ENCODE measurements at regions of chr2 and their contacts with region 1.

Region 1: DNA sequence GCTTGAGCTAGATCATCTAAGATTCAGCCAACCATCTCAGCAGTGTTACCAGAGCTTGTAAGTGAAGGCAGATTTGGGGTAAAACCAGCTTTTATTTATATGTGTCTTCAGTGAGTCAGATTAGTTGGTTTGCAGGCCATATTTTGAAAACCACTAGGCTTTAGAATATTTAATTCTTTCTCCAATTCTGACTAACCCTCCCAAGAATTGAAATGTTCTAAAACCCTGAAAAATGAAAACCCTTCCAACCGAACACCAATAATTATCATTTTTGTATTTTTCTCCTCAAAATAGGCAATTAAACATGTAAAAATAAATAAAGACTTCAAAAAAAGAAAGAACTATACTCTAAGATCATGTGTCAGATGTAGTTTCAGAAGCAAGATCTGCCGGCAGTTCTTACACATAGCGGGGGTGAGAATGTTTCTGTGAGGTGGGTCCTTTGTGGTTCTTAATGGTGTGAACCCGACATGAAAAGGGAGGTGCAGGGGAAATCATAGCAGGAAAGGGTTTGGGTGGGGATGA is 14.2 kb downstream of the PLEK start:
- DNase-seq: no peak
- ATAC-seq: peak; percentile 14
- H3K4me3 ChIP-seq: no peak overlapping the region
- H3K4me1 ChIP-seq: no peaks in the 10 kb centered on the region
- CTCF ChIP-seq: no peak

Region 2: GRCh38 chr2:68423966-68424650 is 44.9 kb after region 1 on chr2:
- intact Hi-C with region 1: loop called in 1 of 2 experiments (anchors 10 kb)
- DNase-seq: no peak
- ATAC-seq: peak; percentile 67
- H3K4me3 ChIP-seq: no peak overlapping the region
- H3K4me1 ChIP-seq: no peaks in the 10 kb centered on the region
- CTCF ChIP-seq: no peak

Measured in mucosa of descending colon (tissue), 3 donors.